Activated CD8-positive, alpha-beta T cell treated with anti-CD3 and anti-CD28 coated beads for 36 hours (primary cell): ENCODE measurements at regions of chr15 and their contacts with region 1.

Region 1: GRCh38 chr15:34342737-34343575 is at the starts of genes NOP10 and NUTM1:
- DNase-seq: peak; percentile 94
- ATAC-seq: peak; percentile 90
- H3K4me3 Mint-ChIP-seq: no peak within 1 kb of the TSS
- H3K27ac Mint-ChIP-seq: peak within 1 kb of the TSS; percentile 82
- H3K4me1 Mint-ChIP-seq: peaks cover 25% of the 10 kb centered on the region
- H3K27me3 Mint-ChIP-seq: no peaks in the 10 kb centered on the region
- CTCF ChIP-seq: peak; percentile 91
- total RNA-seq, gene NOP10: 225 to 226 TPM
- total RNA-seq, gene NUTM1: not detected

Region 2: DNA sequence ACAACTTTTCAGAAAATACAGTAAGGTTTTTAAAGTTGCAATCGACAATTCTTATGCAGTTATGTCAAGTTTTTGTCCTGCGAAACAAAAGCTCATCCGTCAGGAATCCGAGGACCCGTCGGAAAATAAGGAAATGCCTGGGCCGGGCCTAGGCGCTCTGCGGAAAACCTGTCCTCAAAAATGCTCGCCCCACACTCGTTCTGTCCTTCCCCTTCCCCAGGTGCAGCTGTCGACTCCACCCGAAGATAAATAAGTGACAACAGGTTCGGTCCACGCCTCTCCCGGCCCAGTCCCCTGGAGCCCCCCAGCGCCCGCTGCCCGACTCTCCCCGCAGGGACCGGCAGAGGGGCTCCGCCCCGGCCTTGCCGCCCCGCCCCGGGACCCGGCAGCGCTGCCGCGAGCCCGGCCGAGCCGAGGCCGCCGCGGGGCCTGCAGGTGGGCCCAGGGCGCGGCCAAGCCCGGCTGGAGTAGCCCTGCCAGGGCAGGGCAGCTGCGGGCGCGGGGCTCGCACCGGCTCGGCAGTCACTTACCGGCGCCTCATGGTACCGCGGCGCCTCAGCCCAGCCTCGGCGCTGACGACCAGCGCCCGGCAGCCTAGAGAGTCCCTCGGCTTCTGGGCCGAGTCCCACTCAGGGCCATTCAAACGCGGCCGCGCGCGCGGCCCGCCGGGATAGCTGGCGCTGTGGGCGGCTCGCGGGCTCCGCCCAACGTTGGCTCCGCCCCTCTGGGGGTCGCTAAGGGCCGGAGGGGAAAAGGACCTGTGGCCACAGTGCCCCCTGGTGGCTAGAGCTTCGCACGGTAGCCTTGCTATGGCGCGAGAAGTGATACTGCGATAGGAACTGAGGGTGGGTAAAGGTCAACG is 133.3 kb before region 1 on chr15 and contains the start of gene KATNBL1:
- CTCF ChIA-PET with region 1: no interaction called
- POLR2A ChIA-PET with region 1: no interaction called
- intact Hi-C with region 1: no loop called
- DNase-seq: peak; percentile 98
- ATAC-seq: peak; percentile 97
- H3K4me3 Mint-ChIP-seq: peak within 1 kb of the TSS; percentile 88
- H3K27ac Mint-ChIP-seq: peak within 1 kb of the TSS; percentile 87
- H3K4me1 Mint-ChIP-seq: peaks cover 24% of the 10 kb centered on the region
- H3K27me3 Mint-ChIP-seq: no peaks in the 10 kb centered on the region
- CTCF ChIP-seq: peak; percentile 77
- total RNA-seq, gene KATNBL1: 41.6 to 45.5 TPM

Region 3: GRCh38 chr15:34266751-34267150 is 76.2 kb before region 1 on chr15:
- CTCF ChIA-PET with region 1: no interaction called
- POLR2A ChIA-PET with region 1: no interaction called
- intact Hi-C with region 1: no loop called
- DNase-seq: no peak
- ATAC-seq: no peak
- H3K4me3 Mint-ChIP-seq: no peak overlapping the region
- H3K27ac Mint-ChIP-seq: no peak overlapping the region
- H3K4me1 Mint-ChIP-seq: peaks cover 20% of the 10 kb centered on the region
- H3K27me3 Mint-ChIP-seq: no peaks in the 10 kb centered on the region
- CTCF ChIP-seq: no peak

Region 4: DNA sequence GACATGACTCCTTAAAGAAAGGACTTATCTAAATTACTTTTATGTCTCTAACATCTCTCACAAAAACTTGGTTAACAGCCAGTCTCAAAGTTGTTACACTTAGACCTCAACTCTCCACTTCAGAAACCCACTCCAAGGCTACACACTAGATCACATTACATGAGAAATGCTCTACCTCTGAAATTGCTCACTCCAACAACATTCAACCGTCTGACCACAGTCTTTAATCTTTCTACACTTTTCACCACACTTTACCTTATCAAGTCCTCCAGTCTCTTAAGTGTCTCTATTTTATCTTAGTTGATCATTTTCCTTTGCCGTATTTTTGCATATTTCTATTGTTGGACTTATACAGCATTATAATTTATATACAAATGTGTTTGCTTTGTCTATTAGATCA is 11.1 kb before region 1 on chr15:
- CTCF ChIA-PET with region 1: interaction called, 26 read pairs
- POLR2A ChIA-PET with region 1: interaction called, 18 read pairs
- intact Hi-C with region 1: no loop called
- DNase-seq: no peak
- ATAC-seq: peak; percentile 65
- H3K4me3 Mint-ChIP-seq: peak overlapping the region; percentile 52
- H3K27ac Mint-ChIP-seq: peak overlapping the region; percentile 95
- H3K4me1 Mint-ChIP-seq: peaks cover 72% of the 10 kb centered on the region
- H3K27me3 Mint-ChIP-seq: no peaks in the 10 kb centered on the region
- CTCF ChIP-seq: no peak